CD4-positive, alpha-beta memory T cell (primary cell): ENCODE measurements at regions of chr16 and their contacts with region 1.

Region 1: DNA sequence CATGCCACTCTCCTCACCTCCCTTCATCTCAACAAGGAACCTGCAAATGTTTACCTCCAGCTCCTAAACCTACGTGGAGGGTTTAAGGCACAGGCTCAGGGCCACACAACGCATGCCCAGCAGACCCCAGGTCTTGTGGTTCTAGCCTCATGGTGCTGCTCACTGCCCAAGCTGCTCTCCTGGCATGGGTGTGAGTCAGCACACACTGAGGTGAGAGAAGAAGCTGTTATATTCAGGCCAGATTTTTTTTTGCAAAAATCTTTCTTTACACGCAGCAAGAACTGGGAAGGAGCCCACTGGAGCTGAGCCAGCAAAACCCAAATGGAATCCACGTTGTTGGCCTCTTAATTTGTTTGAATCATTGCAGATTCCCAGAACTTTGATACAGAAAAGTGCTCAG is 5.5 kb upstream of the C16orf96 start:
- DNase-seq: no peak
- H3K4me3 ChIP-seq: no peak overlapping the region
- H3K4me3 Mint-ChIP-seq: no peak overlapping the region
- H3K27ac ChIP-seq: no peak overlapping the region
- H3K27ac Mint-ChIP-seq: peak overlapping the region in 2 of 7 donors; percentile 46 to 88
- H3K4me1 ChIP-seq: peaks cover 6% of the 10 kb centered on the region
- H3K4me1 Mint-ChIP-seq: peaks cover 4 to 7% (median 5%) of the 10 kb centered on the region in 4 donors
- H3K27me3 ChIP-seq: no peaks in the 10 kb centered on the region
- H3K27me3 Mint-ChIP-seq: no peaks in the 10 kb centered on the region

Region 2: DNA sequence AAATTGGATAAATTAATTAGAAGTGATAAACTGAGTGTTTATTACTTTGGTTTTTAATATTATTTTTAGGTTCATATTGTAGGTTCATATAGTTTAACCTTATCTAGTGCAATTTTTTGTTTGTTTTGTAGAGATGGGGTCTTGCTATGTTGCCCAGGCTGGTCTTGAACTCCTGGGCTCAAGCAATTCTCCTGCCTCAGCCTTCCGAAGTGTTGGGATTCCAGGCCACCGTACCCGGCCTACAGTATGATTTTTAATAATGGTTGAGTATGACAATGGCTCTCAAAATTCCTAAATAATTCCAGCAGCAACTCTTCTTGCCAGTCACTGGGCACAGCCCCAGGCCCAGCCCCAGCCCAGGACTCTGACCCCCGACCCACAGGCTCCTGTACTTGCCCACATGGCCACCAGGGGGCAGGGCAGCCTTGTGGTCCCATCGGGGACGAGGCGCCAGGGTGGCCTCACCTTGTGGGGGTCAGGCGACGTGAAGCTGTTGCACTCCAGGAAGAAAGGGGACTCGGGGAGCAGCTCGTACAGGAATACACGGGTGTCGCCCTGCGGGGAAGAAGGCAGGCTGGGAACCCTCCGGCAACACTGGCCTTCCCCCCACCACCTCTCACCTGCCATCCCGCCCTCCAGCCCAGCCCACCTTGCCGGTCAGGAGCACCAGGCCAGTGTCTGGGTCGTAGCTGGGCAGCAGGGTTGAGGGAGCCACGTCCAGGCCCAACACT is 191.6 kb before region 1 on chr16:
- CTCF ChIA-PET with region 1: interaction called, 7 read pairs
- POLR2A ChIA-PET with region 1: no interaction called
- intact Hi-C with region 1: loop called (anchors 1 kb)
- DNase-seq: peak in 4 of 5 donors; percentile 49 to 60 (median 58)
- H3K4me3 ChIP-seq: no peak overlapping the region
- H3K4me3 Mint-ChIP-seq: no peak overlapping the region
- H3K27ac ChIP-seq: no peak overlapping the region
- H3K27ac Mint-ChIP-seq: peak overlapping the region; percentile 68 to 92 (median 81)
- H3K4me1 ChIP-seq: no peaks in the 10 kb centered on the region
- H3K4me1 Mint-ChIP-seq: peaks cover 0 to 3% (median under 1%) of the 10 kb centered on the region in 4 donors
- H3K27me3 ChIP-seq: no peaks in the 10 kb centered on the region
- H3K27me3 Mint-ChIP-seq: no peaks in the 10 kb centered on the region

Region 3: DNA sequence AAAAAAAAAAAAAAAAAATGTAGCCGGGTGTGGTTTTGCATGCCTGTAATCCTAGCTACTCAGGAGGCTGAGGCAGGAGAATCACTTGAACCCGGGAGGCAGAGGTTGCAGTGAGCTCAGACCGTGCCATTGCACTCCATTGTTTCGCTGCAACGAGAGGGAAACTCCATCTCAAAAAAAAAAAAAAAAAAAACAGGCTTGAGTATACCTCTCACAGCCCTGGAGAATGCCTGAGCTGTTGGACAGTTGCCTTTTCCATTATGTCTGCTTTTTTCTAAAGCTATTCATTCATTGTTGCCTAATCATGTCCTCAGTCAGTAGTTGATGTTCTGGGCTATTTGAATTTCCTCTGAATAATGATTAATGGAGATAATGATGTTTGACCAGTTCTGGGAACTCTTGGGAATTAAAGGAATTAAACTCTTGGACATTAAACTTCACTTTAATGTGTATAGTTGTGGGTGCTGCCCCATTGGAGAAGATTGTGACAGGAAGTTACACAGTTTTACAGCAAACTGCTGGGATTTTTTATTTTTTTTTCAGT is 62.6 kb before region 1 on chr16:
- CTCF ChIA-PET with region 1: interaction called, 27 read pairs
- POLR2A ChIA-PET with region 1: interaction called, 3 read pairs
- intact Hi-C with region 1: no loop called
- DNase-seq: peak in 3 of 5 donors; percentile 40 to 54 (median 42)
- H3K4me3 ChIP-seq: peak overlapping the region in 1 of 2 donors; percentile 33
- H3K4me3 Mint-ChIP-seq: peak overlapping the region; percentile 56 to 91 (median 81)
- H3K27ac ChIP-seq: peak overlapping the region; percentile 50
- H3K27ac Mint-ChIP-seq: peak overlapping the region; percentile 81 to 98 (median 97)
- H3K4me1 ChIP-seq: peaks cover 84% of the 10 kb centered on the region
- H3K4me1 Mint-ChIP-seq: peaks cover 36 to 70% (median 57%) of the 10 kb centered on the region in 4 donors
- H3K27me3 ChIP-seq: no peaks in the 10 kb centered on the region
- H3K27me3 Mint-ChIP-seq: no peaks in the 10 kb centered on the region

Region 4: DNA sequence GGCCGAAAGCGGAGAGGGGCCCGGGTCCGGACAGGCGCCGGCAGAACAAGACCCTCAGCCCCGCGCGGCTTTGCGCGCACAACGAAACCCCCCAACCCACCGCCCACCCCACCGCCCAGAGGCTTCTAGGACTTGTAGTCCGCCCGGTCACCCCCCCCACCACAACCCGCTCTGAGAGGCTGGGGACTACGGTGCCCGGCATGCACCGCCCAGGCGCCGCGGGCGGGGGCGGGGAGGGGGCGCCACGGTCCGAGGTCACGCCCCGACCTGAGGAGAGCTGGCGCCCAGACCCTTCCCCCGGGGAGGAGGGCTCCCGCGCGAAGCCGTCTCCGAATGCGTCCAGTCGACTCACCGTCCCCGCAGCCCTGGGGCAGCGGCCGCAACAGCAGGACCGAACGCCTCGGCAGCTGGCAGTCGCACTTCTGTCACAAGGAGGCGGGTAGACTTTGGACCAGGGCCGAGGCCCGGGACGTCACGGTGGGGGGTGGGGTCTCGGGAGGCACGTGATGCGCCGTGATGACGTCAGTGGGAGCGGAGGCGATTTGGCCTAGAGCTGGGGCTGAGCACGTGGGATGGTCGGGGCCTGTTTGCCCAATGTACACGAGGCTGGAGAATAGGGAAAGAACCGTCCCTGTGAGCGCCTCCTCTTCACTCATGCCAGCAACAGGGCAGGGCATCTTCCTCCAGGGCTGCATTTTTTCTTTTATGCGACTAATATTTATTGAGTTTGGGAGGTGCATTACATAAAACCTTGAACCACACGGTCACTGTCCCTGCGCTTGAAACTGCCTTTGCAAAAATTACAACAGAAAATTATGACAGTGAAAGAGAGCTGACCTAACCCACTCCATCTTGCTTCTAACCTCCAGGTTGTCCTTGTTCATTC is 12.0 kb before region 1 on chr16 and contains the start of gene CDIP1:
- CTCF ChIA-PET with region 1: interaction called, 10 read pairs
- POLR2A ChIA-PET with region 1: interaction called, 13 read pairs
- intact Hi-C with region 1: no loop called
- DNase-seq: peak; percentile 89 to 94 (median 90)
- H3K4me3 ChIP-seq: peak within 1 kb of the TSS; percentile 69 to 92
- H3K4me3 Mint-ChIP-seq: peak within 1 kb of the TSS; percentile 82 to 89 (median 84)
- H3K27ac ChIP-seq: peak within 1 kb of the TSS; percentile 77
- H3K27ac Mint-ChIP-seq: peak within 1 kb of the TSS; percentile 89 to 97 (median 94)
- H3K4me1 ChIP-seq: peaks cover 30% of the 10 kb centered on the region
- H3K4me1 Mint-ChIP-seq: peaks cover 18 to 35% (median 27%) of the 10 kb centered on the region in 4 donors
- H3K27me3 ChIP-seq: no peaks in the 10 kb centered on the region
- H3K27me3 Mint-ChIP-seq: no peaks in the 10 kb centered on the region
- total RNA-seq, gene CDIP1: 19.0 to 21.1 TPM

Region 5: GRCh38 chr16:4570688-4571321 is 20.2 kb after region 1 on chr16:
- CTCF ChIA-PET with region 1: no interaction called
- POLR2A ChIA-PET with region 1: no interaction called
- intact Hi-C with region 1: no loop called
- DNase-seq: no peak
- H3K4me3 ChIP-seq: no peak overlapping the region
- H3K4me3 Mint-ChIP-seq: no peak overlapping the region
- H3K27ac ChIP-seq: no peak overlapping the region
- H3K27ac Mint-ChIP-seq: no peak overlapping the region
- H3K4me1 ChIP-seq: no peaks in the 10 kb centered on the region
- H3K4me1 Mint-ChIP-seq: peaks cover 0 to 4% (median 4%) of the 10 kb centered on the region in 4 donors
- H3K27me3 ChIP-seq: no peaks in the 10 kb centered on the region
- H3K27me3 Mint-ChIP-seq: no peaks in the 10 kb centered on the region

Region 6: DNA sequence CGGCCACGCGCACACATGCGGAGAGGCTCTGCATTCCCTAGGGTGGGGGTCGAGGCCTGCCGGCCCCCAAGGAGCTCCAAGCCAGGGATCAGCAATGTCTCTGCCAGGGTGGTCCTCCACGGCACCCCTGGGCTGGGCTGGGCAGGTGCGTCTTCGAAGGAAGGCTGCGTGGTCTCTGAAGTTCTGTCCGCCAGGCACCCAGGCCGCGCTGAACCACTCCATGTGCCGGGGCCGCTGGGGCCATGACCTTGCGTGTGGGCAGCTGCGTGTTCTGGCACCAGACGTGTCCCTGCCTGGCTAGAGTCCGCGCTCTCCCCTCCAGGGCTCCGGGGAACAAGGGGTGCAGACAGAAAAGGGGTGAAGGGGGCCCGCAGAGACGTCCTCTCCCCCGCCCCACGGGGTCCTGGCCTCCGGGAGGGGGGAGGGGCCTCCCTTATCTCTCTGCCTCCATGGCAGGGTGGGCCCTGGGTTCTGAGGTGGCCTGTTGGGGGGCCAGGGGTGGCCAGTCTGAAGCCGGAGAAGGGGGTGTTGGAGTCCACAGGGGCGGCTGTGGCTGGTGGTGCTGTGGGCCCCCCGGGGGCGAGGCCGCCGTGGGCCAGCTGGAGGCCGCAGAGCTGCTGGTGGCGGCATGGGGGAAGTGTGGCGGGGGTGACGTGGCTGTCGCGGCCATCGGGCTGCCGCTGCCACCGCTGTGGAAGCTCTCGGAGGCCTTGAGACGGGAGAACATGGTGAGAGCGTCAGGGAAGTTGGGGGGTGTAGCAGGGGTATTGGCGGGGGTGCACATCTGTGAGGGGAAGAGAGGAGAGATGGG is 58.8 kb after region 1 on chr16:
- CTCF ChIA-PET with region 1: no interaction called
- POLR2A ChIA-PET with region 1: no interaction called
- intact Hi-C with region 1: no loop called
- DNase-seq: no peak
- H3K4me3 ChIP-seq: no peak overlapping the region
- H3K4me3 Mint-ChIP-seq: no peak overlapping the region
- H3K27ac ChIP-seq: no peak overlapping the region
- H3K27ac Mint-ChIP-seq: no peak overlapping the region
- H3K4me1 ChIP-seq: peaks cover 18% of the 10 kb centered on the region
- H3K4me1 Mint-ChIP-seq: peaks cover 1 to 18% (median 6%) of the 10 kb centered on the region in 4 donors
- H3K27me3 ChIP-seq: no peaks in the 10 kb centered on the region
- H3K27me3 Mint-ChIP-seq: no peaks in the 10 kb centered on the region